Mammary epithelial cell (primary cell): ENCODE measurements at regions of chr13 and their contacts with region 1.

Region 1: DNA sequence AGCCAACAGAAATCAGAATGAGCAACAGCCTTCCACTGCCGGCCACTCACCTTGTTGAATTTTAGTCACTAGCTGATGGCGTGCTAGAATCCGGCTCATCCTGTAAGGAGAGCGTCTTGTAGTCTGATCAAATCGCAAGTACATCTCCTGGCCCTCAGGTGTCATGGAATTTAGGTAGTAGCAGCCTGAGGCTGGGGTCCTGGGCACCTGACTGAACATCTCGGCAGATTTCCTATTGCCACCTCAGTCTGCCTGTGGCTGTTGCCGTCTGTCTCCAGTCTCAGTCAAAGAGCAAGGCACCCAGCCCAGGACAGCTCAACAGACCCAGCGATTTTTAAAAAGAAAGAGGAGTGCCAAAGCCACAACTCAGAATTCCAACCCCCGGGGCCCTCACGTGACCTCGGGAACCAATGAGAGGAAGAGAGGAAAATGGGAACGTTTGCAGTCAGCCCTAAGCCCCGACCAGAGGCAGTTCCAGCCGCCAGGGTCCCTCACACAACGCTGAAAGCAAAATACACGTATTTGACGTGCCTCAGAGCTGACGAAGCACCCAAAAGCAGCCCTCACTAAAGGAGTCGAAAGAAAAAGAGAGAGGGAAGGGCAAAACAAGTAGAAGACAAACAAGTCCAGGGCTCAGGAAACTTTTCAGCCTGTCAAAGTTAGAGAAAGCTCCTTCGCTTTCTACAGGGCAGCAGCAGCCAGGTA is at the start of gene STARD13:
- DNase-seq: peak; percentile 96
- H3K4me3 ChIP-seq: peak within 1 kb of the TSS; percentile 67 to 94 (median 71)
- H3K27ac ChIP-seq: peak within 1 kb of the TSS; percentile 99
- H3K4me1 ChIP-seq: peaks cover 29% of the 10 kb centered on the region
- H3K27me3 ChIP-seq: no peaks in the 10 kb centered on the region
- CTCF ChIP-seq: peak; percentile 20 to 36
- total RNA-seq, gene STARD13: 10.8 to 15.5 TPM

Region 2: GRCh38 chr13:32976047-32976805 is 309.3 kb before region 1 on chr13:
- CTCF ChIA-PET with region 1: no interaction called
- dilution Hi-C with region 1: no loop called
- in situ Hi-C with region 1: no loop called
- intact Hi-C with region 1: no loop called
- DNase-seq: no peak
- H3K4me3 ChIP-seq: no peak overlapping the region
- H3K27ac ChIP-seq: no peak overlapping the region
- H3K4me1 ChIP-seq: no peaks in the 10 kb centered on the region
- H3K27me3 ChIP-seq: no peaks in the 10 kb centered on the region
- CTCF ChIP-seq: no peak

Region 3: GRCh38 chr13:33003461-33004019 is 282.0 kb before region 1 on chr13:
- CTCF ChIA-PET with region 1: no interaction called
- dilution Hi-C with region 1: no loop called
- in situ Hi-C with region 1: no loop called
- intact Hi-C with region 1: no loop called
- DNase-seq: no peak
- H3K4me3 ChIP-seq: no peak overlapping the region
- H3K27ac ChIP-seq: no peak overlapping the region
- H3K4me1 ChIP-seq: no peaks in the 10 kb centered on the region
- H3K27me3 ChIP-seq: no peaks in the 10 kb centered on the region
- CTCF ChIP-seq: no peak

Region 4: DNA sequence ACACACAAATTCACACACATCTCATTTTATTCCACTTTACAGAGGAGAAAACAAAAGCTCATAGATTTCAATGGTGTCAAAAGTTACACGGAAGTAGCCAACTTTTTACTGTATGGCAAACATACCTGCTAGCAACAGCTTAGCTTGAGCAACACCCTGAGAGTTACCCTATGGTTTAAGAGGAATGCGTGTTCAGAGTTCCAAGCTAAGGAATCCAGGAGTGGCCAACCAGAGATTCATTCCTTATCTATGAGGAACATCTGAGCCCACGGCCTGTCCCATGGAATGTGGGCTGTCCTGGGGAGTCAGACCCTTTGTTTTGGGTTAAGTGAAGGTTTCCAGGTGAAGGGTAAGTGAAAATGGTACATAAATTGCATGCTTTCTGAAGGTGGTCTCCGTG is 67.6 kb before region 1 on chr13:
- CTCF ChIA-PET with region 1: no interaction called
- dilution Hi-C with region 1: no loop called
- in situ Hi-C with region 1: no loop called
- intact Hi-C with region 1: loop called (anchors 1 kb)
- DNase-seq: peak; percentile 55
- H3K4me3 ChIP-seq: no peak overlapping the region
- H3K27ac ChIP-seq: peak overlapping the region; percentile 98
- H3K4me1 ChIP-seq: peaks cover 45% of the 10 kb centered on the region
- H3K27me3 ChIP-seq: no peaks in the 10 kb centered on the region
- CTCF ChIP-seq: no peak

Region 5: GRCh38 chr13:33388286-33388998 is 102.9 kb after region 1 on chr13:
- CTCF ChIA-PET with region 1: no interaction called
- dilution Hi-C with region 1: no loop called
- in situ Hi-C with region 1: no loop called
- intact Hi-C with region 1: no loop called
- DNase-seq: peak; percentile 59
- H3K4me3 ChIP-seq: no peak overlapping the region
- H3K27ac ChIP-seq: no peak overlapping the region
- H3K4me1 ChIP-seq: no peaks in the 10 kb centered on the region
- H3K27me3 ChIP-seq: no peaks in the 10 kb centered on the region
- CTCF ChIP-seq: peak; percentile 12 to 22

Region 6: GRCh38 chr13:34224877-34225276 is 939.3 kb after region 1 on chr13:
- CTCF ChIA-PET with region 1: no interaction called
- dilution Hi-C with region 1: no loop called
- in situ Hi-C with region 1: no loop called
- intact Hi-C with region 1: no loop called
- DNase-seq: no peak
- H3K4me3 ChIP-seq: no peak overlapping the region
- H3K27ac ChIP-seq: no peak overlapping the region
- H3K4me1 ChIP-seq: no peaks in the 10 kb centered on the region
- H3K27me3 ChIP-seq: no peaks in the 10 kb centered on the region
- CTCF ChIP-seq: no peak